BJ (cell line): ENCODE measurements at regions of chr11 and their contacts with region 1.

Region 1: GRCh38 chr11:119334174-119334930 is at the start of gene RNF26:
- DNase-seq: peak; percentile 86
- H3K4me3 ChIP-seq: peak within 1 kb of the TSS; percentile 78
- H3K27me3 ChIP-seq: no peaks in the 10 kb centered on the region
- CTCF ChIP-seq: no peak
- polyA plus RNA-seq, gene RNF26: 38.4 and 65.1 TPM in 2 replicates

Region 2: GRCh38 chr11:118768690-118769089 is 565.7 kb before region 1 on chr11:
- CTCF ChIA-PET with region 1: no interaction called
- POLR2A ChIA-PET with region 1: no interaction called
- DNase-seq: no peak
- H3K4me3 ChIP-seq: no peak overlapping the region
- H3K27me3 ChIP-seq: no peaks in the 10 kb centered on the region
- CTCF ChIP-seq: no peak

Region 3: DNA sequence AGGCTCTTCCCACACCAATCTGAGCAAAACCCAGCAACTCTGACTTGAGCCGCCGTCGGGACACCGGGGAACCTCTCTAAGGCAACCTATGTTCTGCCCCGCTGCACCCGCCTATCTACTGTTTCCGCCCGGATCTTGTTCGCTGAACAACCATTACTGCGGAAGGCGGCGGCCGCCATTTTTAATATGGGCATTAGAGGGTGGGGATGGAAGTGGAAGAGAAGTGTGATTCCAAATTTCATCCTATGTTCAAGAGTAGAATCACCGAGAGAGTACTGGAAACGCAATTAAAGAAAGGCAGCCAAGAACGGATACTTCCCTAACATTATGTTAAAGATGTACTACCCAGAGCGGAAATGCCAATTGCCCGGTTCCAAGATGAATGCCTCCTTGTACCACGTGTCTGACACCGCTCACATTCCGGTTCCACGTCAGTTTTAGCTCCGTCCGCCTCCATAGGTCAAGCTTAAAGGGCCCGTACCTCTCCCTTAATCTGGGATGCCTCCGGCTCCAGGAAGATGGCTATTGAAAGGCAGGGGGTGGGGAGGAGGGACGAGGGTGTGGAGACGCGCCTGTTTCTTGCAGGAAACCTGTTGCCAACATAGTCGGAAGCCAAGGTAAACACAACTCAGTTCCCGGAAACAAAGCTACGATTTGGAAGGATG is 232.5 kb before region 1 on chr11 and contains the start of gene DPAGT1:
- CTCF ChIA-PET with region 1: interaction called, 8 read pairs
- POLR2A ChIA-PET with region 1: interaction called, 11 read pairs
- DNase-seq: peak; percentile 80
- H3K4me3 ChIP-seq: peak within 1 kb of the TSS; percentile 76
- H3K27me3 ChIP-seq: no peaks in the 10 kb centered on the region
- CTCF ChIP-seq: no peak
- polyA plus RNA-seq, gene DPAGT1: 67.4 and 75.6 TPM in 2 replicates

Region 4: GRCh38 chr11:119323538-119324033 is 10.8 kb before region 1 on chr11:
- CTCF ChIA-PET with region 1: interaction called, 146 read pairs
- POLR2A ChIA-PET with region 1: no interaction called
- DNase-seq: no peak
- H3K4me3 ChIP-seq: no peak overlapping the region
- H3K27me3 ChIP-seq: no peaks in the 10 kb centered on the region
- CTCF ChIP-seq: peak; percentile 81

Region 5: GRCh38 chr11:119356349-119357031 is 22.1 kb after region 1 on chr11:
- CTCF ChIA-PET with region 1: interaction called, 126 read pairs
- POLR2A ChIA-PET with region 1: no interaction called
- DNase-seq: no peak
- H3K4me3 ChIP-seq: peak overlapping the region; percentile 53
- H3K27me3 ChIP-seq: peaks cover 4% of the 10 kb centered on the region; the same call in 1 of the 2 replicates
- CTCF ChIP-seq: peak; percentile 75

Region 6: DNA sequence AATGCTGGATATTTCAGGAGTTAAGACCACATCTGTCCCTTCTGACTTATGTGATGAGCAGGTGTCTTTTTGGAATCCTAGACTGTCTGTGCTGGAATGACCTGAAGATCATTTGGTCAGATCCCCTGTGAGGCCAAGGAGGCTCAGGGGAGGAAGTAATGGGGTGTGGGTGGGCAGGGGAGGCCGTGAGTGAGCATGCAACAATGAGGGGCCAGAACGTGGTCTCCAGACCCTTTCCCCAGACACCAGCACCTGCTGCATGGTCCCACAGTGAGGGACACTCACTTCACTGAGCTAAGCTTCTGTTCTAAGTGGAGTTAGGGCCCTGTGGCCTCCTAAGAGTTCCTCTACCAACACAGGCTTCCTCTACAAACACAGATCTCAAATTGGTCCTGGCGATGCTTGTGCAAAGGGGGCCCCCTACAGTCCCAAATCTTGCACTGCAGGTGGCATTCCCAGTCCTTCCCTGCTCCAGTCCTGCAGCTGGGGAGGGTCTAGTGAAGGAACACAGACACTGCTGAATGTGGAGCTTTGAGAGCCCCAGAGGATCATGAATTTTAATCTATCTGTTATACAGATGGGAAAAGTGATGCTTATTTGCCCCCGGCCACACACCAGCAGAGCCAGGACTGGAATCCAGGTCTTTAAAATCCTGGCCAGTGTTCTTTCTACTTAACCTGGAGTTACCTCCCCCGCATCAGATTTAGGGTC is 39.7 kb after region 1 on chr11:
- CTCF ChIA-PET with region 1: interaction called, 110 read pairs
- POLR2A ChIA-PET with region 1: no interaction called
- DNase-seq: no peak
- H3K4me3 ChIP-seq: no peak overlapping the region
- H3K27me3 ChIP-seq: no peaks in the 10 kb centered on the region; the same call in 1 of the 2 replicates
- CTCF ChIP-seq: peak; percentile 93